Activated CD4-positive, alpha-beta T cell treated with anti-CD3 and anti-CD28 coated beads for 36 hours (primary cell): ENCODE measurements at regions of chr19 and their contacts with region 1.

Region 1: DNA sequence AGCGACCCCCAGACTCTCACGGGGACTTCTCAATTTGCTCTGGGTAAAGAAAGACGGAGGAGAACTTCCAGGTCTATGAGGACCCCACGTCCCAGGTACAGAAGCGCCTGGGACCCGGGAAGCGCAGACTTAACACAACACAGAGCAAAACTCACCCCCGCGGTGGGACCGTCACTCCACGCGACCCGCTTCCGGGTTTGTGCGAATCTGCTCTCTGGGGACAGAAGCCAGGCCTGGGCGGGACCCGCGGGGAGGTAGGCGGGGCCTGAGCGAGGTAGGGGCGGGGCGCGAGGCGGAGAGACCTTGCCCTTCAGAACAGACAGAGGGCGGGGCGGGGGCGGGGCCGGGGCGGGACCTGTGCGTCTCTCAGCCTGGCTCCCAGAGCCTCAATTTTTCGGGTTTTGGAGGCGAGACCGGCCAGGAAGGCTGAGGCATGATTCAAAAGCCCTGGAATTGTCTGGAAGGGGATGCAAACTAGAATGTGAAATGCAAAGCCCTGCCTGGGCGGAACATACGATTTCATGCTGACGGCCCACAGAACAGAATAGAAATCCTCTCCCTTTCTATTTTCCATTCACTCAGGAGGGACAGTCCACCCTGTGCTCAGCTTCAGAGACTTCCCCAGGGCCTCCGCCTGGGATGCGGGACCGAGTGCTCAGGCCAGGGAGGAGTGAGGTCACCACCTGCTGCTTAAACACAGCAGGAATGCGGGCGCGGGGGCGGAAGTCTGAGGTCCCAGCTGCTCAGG is 19.3 kb upstream of the ZNF888 start:
- DNase-seq: peak; percentile 97
- ATAC-seq: peak; percentile 99
- H3K4me3 Mint-ChIP-seq: peak overlapping the region; percentile 90
- H3K27ac Mint-ChIP-seq: peak overlapping the region; percentile 91
- H3K4me1 Mint-ChIP-seq: peaks cover 18% of the 10 kb centered on the region
- H3K27me3 Mint-ChIP-seq: no peaks in the 10 kb centered on the region

Region 2: DNA sequence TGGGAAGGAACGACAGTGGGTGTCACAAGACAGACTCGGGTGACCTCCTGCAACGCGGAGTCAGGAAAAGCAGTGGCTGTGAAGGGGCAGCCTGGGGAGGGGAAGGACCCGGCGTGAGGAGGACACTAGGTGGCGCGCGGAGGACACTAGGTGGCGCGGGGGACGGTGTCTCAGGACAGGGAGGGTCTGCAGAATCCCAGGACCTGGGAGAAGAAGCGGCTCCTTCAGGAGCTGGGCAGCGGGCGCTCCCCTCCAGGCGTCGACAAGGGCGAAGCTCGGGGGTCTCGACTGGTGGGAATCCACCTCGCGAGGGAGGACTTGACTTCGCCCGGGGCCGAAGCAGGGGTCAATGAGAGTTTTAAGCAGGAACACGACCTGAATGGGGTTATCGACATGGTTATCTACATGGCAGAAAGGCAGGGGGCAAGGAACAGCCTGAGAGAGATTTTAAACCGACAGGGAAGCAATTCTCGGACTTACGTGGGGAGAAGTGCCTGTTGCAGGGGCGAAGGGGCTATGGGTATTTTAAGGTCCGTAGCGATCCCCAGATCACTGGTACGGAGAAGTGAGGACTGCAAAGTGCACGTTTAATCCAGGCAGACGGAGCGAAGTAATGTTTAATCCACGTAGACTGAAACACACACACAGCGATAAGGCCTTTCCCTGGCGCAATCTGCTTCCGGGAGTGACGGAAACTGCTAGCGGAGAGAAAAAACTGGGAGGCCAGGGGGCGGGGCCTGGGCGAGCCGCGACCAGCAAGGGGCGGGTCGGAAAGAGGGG is 803.1 kb before region 1 on chr19 and contains the start of gene ZNF616:
- CTCF ChIA-PET with region 1: no interaction called
- POLR2A ChIA-PET with region 1: no interaction called
- intact Hi-C with region 1: loop called in 1 of 2 experiments (anchors 1 kb)
- DNase-seq: peak; percentile 90
- ATAC-seq: peak; percentile 81
- H3K4me3 Mint-ChIP-seq: peak within 1 kb of the TSS; percentile 96
- H3K27ac Mint-ChIP-seq: peak within 1 kb of the TSS; percentile 97
- H3K4me1 Mint-ChIP-seq: peaks cover 27% of the 10 kb centered on the region
- H3K27me3 Mint-ChIP-seq: no peaks in the 10 kb centered on the region
- total RNA-seq, gene ZNF616: 13.9 to 15.7 TPM

Region 3: DNA sequence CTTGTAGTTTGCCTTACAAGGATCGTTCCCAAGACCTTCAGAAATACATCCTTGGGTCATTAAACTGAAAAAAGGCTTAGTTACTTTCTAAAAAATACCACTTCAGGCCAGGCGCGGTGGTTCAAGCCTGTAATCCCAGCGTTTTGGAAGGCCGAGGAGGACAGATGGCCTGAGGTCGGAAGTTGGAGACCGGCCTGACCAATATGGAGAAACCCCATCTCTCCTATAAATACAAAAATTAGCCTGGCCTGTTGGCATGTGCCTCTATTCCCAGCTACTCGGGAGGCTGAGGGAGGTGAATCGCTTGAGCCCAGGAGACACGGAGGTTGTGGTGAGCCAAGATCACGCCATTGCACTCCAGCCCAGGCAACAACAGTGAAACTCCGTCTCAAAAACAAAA is 118.9 kb before region 1 on chr19:
- CTCF ChIA-PET with region 1: no interaction called
- POLR2A ChIA-PET with region 1: no interaction called
- intact Hi-C with region 1: loop called in 1 of 2 experiments (anchors 1 kb)
- DNase-seq: no peak
- ATAC-seq: no peak
- H3K4me3 Mint-ChIP-seq: no peak overlapping the region
- H3K27ac Mint-ChIP-seq: no peak overlapping the region
- H3K4me1 Mint-ChIP-seq: peaks cover 9% of the 10 kb centered on the region
- H3K27me3 Mint-ChIP-seq: no peaks in the 10 kb centered on the region

Region 4: GRCh38 chr19:52897144-52897935 is 45.2 kb before region 1 on chr19 and contains the start of gene ZNF320:
- CTCF ChIA-PET with region 1: no interaction called
- POLR2A ChIA-PET with region 1: no interaction called
- intact Hi-C with region 1: loop called (anchors 1 kb)
- DNase-seq: peak; percentile 98
- ATAC-seq: peak; percentile 100
- H3K4me3 Mint-ChIP-seq: peak within 1 kb of the TSS; percentile 88
- H3K27ac Mint-ChIP-seq: peak within 1 kb of the TSS; percentile 93
- H3K4me1 Mint-ChIP-seq: peaks cover 31% of the 10 kb centered on the region
- H3K27me3 Mint-ChIP-seq: no peaks in the 10 kb centered on the region
- total RNA-seq, gene ZNF320: 10.8 to 12.2 TPM

Region 5: GRCh38 chr19:52993323-52994178 is 51.0 kb after region 1 on chr19:
- CTCF ChIA-PET with region 1: no interaction called
- POLR2A ChIA-PET with region 1: no interaction called
- intact Hi-C with region 1: loop called in 1 of 2 experiments (anchors 1 kb)
- DNase-seq: peak; percentile 88
- ATAC-seq: peak; percentile 88
- H3K4me3 Mint-ChIP-seq: peak overlapping the region; percentile 72
- H3K27ac Mint-ChIP-seq: no peak overlapping the region
- H3K4me1 Mint-ChIP-seq: peaks cover 15% of the 10 kb centered on the region
- H3K27me3 Mint-ChIP-seq: peaks cover 9% of the 10 kb centered on the region

Region 6: GRCh38 chr19:53019684-53020083 is 77.1 kb after region 1 on chr19:
- CTCF ChIA-PET with region 1: no interaction called
- POLR2A ChIA-PET with region 1: no interaction called
- intact Hi-C with region 1: no loop called
- DNase-seq: peak; percentile 55
- ATAC-seq: no peak
- H3K4me3 Mint-ChIP-seq: no peak overlapping the region
- H3K27ac Mint-ChIP-seq: no peak overlapping the region
- H3K4me1 Mint-ChIP-seq: no peaks in the 10 kb centered on the region
- H3K27me3 Mint-ChIP-seq: no peaks in the 10 kb centered on the region

Region 7: DNA sequence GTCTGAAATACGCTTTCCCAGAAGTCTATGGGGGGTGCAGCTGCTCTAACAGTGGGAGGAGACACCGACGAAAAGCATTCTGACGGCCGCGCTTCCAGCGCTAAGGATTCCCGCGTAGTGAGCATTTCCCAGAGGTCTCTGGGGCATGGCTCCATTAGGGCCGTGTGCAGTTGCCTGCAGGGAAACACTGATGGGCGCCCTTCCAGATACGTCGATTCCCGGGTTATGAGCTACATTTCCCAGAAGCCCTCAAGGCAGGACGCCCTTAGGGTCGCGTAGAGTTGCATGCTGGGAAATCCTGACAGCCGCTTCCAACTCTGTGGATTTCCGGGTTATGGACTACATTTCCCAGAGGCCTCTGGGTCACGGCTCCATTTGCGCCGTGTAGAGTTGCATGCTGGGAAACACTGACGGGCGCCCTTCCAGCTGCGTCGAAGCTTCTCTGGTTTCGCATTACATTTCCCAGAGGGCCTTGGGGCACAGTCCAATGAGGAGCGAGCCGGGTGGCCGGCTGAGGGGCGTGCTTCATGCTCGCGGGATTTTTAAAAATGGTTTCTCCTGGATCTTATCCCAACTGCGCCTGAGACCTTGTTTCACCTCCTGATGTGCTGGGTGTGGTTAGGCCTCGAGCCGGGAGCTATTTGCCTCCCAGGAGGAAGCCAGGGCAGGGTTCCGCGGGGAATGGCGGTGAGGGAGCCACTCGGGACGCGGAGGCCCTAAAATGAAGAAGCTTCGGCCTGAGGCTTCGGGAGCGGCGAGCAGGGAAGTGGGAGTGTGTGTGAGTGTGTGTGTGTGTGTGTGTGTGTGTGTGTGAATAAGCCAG is 578.2 kb after region 1 on chr19:
- CTCF ChIA-PET with region 1: no interaction called
- POLR2A ChIA-PET with region 1: no interaction called
- intact Hi-C with region 1: loop called in 1 of 2 experiments (anchors 5 kb)
- DNase-seq: peak; percentile 93
- ATAC-seq: peak; percentile 99
- H3K4me3 Mint-ChIP-seq: peak overlapping the region; percentile 100
- H3K27ac Mint-ChIP-seq: peak overlapping the region; percentile 89
- H3K4me1 Mint-ChIP-seq: peaks cover 15% of the 10 kb centered on the region
- H3K27me3 Mint-ChIP-seq: no peaks in the 10 kb centered on the region

Region 8: GRCh38 chr19:54115109-54116063 is 1172.8 kb after region 1 on chr19 and contains the starts of genes PRPF31 and TFPT:
- CTCF ChIA-PET with region 1: no interaction called
- POLR2A ChIA-PET with region 1: no interaction called
- intact Hi-C with region 1: no loop called
- DNase-seq: peak; percentile 97
- ATAC-seq: peak; percentile 94
- H3K4me3 Mint-ChIP-seq: peak within 1 kb of the TSS; percentile 83
- H3K27ac Mint-ChIP-seq: peak within 1 kb of the TSS; percentile 96
- H3K4me1 Mint-ChIP-seq: peaks cover 25% of the 10 kb centered on the region
- H3K27me3 Mint-ChIP-seq: no peaks in the 10 kb centered on the region
- total RNA-seq, gene PRPF31: 85.5 to 115 TPM
- total RNA-seq, gene TFPT: 28.5 to 39.3 TPM